Heart right ventricle (tissue), 16 donors: ENCODE measurements at regions of chr10 and their contacts with region 1.

Region 1: GRCh38 chr10:54262726-54263125 is 538.3 kb downstream of the PCDH15 start:
- DNase-seq: no peak
- ATAC-seq: no peak
- H3K4me3 ChIP-seq: no peak overlapping the region
- H3K27ac ChIP-seq: no peak overlapping the region
- H3K4me1 ChIP-seq: no peaks in the 10 kb centered on the region
- H3K27me3 ChIP-seq: no peaks in the 10 kb centered on the region
- CTCF ChIP-seq: no peak

Region 2: DNA sequence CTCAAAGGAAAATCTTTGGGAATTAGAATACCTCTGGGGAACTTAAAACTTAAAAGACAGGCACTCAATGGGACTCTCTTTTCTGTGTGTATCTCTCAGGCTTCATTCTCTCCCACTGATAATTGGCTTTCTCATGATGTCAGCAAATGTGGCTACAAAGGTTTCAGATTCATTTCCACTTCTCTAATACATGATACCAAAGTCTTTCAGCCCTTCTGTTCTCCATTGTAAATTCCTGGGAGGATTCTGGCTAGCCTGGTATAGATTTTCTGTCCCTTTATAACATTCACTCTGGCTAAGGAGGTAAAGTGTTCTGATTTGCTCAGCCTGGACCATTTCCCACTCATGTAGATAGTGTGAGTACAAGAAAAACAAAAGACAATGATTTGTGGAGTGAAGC is 67.9 kb before region 1 on chr10:
- intact Hi-C with region 1: loop called in 1 of 10 experiments (anchors 10 kb)
- DNase-seq: no peak
- ATAC-seq: no peak
- H3K4me3 ChIP-seq: no peak overlapping the region
- H3K27ac ChIP-seq: no peak overlapping the region
- H3K4me1 ChIP-seq: no peaks in the 10 kb centered on the region
- H3K27me3 ChIP-seq: no peaks in the 10 kb centered on the region
- CTCF ChIP-seq: no peak